IMR-90 (cell line): ENCODE measurements at regions of chr5 and their contacts with region 1.

Region 1: GRCh38 chr5:34898258-34898895 is 16.9 kb downstream of the RAD1 start:
- DNase-seq: peak; percentile 77
- ATAC-seq: peak; percentile 90
- H3K4me3 ChIP-seq: no peak overlapping the region
- H3K27ac ChIP-seq: no peak overlapping the region
- H3K4me1 ChIP-seq: no peaks in the 10 kb centered on the region
- H3K27me3 ChIP-seq: no peaks in the 10 kb centered on the region
- CTCF ChIP-seq: peak; percentile 84
- POLR2A ChIP-seq: 0 out of 2 replicates have a peak, but pooled peaks have one; percentile 38
- RAD21 ChIP-seq: peak; percentile 92

Region 2: DNA sequence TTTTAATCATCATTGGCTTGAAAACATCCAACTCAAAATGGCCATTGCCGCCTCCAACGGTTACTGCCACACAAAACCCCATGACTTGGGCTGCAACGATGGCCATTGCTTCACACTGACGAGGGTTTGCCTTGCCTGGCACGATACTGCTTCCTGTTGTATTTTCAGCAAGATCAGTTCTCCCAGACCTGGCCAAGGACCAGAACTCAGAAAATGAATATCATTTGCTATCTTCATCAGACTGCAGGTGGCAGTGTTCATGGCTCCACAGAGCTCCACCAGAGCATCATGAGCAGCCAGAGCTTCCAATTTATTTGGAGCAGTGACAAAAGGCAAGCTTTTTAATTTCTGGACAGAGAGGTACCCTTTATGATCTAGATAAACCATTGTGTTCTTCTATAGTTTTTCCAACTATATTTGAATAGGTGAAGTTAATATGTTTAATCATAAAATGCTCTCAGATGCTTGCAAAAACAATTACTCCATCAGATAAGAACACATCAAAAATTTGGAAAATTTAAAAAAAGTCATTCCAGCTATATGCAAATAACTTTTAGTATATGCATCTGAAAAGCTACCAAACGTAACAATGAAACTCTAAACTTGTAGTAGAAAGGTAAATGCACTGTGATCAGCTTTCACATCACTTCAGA is 900.9 kb before region 1 on chr5:
- CTCF ChIA-PET with region 1: no interaction called
- POLR2A ChIA-PET with region 1: no interaction called
- dilution Hi-C with region 1: no loop called
- in situ Hi-C with region 1: loop called (anchors 25 kb)
- intact Hi-C with region 1: no loop called
- DNase-seq: peak; percentile 88
- ATAC-seq: peak; percentile 81
- H3K4me3 ChIP-seq: no peak overlapping the region
- H3K27ac ChIP-seq: no peak overlapping the region
- H3K4me1 ChIP-seq: peaks cover 8% of the 10 kb centered on the region; the same call in 1 of the 2 replicates
- H3K27me3 ChIP-seq: no peaks in the 10 kb centered on the region
- CTCF ChIP-seq: peak; percentile 76
- POLR2A ChIP-seq: no peak
- RAD21 ChIP-seq: peak; percentile 81

Region 3: DNA sequence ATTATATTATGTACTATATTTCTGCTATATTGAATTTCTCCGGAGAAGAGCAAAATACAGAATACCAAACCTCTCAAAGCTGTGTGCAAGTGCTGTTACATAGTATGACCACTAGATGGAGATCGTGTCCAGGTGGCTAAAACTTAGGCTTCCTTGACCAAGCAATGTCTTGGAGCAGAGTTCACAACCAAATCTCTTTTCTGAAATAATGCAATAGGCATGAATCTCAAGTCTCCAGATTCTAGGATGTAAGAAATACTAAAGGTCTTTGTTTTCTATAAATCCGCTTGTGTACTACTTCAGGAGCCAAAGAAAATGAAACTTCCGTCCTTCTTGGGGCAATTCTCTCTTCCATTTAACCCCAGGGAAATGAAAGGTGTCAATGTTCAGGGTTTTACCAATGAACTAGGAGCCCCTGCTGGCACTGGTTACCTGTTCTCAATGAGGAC is 423.8 kb before region 1 on chr5:
- CTCF ChIA-PET with region 1: interaction called, 8 read pairs
- POLR2A ChIA-PET with region 1: no interaction called
- dilution Hi-C with region 1: no loop called
- in situ Hi-C with region 1: loop called (anchors 5 kb)
- intact Hi-C with region 1: loop called (anchors 1 kb)
- DNase-seq: peak; percentile 77
- ATAC-seq: peak; percentile 99
- H3K4me3 ChIP-seq: no peak overlapping the region
- H3K27ac ChIP-seq: no peak overlapping the region
- H3K4me1 ChIP-seq: no peaks in the 10 kb centered on the region
- H3K27me3 ChIP-seq: peaks cover 16% of the 10 kb centered on the region
- CTCF ChIP-seq: peak; percentile 94
- POLR2A ChIP-seq: peak; percentile 45; the same call in 1 of the 2 replicates
- RAD21 ChIP-seq: peak; percentile 96

Region 4: GRCh38 chr5:34486160-34486848 is 412.1 kb before region 1 on chr5:
- CTCF ChIA-PET with region 1: interaction called, 13 read pairs
- POLR2A ChIA-PET with region 1: no interaction called
- dilution Hi-C with region 1: no loop called
- in situ Hi-C with region 1: no loop called
- intact Hi-C with region 1: loop called (anchors 1 kb)
- DNase-seq: peak; percentile 88
- ATAC-seq: peak; percentile 54
- H3K4me3 ChIP-seq: no peak overlapping the region
- H3K27ac ChIP-seq: peak overlapping the region; percentile 70; the same call in 1 of the 2 replicates
- H3K4me1 ChIP-seq: peaks cover 31% of the 10 kb centered on the region
- H3K27me3 ChIP-seq: no peaks in the 10 kb centered on the region
- CTCF ChIP-seq: peak; percentile 90
- POLR2A ChIP-seq: peak; percentile 27; the same call in 1 of the 2 replicates
- RAD21 ChIP-seq: peak; percentile 93

Region 5: DNA sequence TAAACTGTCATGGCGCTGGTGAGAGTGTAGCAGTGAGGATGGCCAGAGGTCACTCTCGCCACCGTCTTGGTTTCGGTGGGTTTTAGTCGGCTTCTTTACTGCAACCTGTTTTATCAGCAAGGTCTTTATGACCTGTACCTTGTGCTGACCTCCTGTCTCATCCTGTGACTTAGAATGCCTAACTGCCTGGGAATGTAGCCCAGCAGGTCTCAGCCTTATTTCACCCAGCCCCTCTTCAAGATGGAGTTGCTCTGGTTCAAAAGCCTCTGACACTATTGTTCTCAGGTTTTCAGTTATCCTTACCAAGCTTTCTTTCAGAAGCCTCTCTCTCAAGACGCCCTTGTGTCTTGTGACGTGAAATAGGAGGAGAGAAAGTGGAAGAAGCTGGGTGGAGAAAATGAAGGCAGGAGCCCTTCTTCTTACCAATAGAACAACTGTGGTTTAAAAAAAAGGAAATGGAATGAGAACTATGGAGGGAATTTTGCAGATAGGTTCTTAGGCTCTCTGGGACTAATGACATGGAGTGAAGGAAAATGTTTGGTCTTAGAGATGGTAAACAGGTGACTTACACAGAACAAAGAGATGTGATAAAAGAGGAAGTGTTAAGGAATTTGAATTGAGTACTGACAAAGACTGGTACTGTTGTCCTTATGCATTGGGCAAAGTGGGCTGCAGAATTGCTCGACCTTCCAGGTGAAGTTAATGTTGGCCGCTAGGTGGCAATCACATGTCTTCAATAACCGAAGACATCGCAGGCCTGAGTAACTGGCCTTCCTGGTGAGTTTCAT is 375.6 kb before region 1 on chr5:
- CTCF ChIA-PET with region 1: interaction called, 11 read pairs
- POLR2A ChIA-PET with region 1: interaction called, 3 read pairs
- dilution Hi-C with region 1: no loop called
- in situ Hi-C with region 1: no loop called
- intact Hi-C with region 1: loop called (anchors 1 kb)
- DNase-seq: peak; percentile 92
- ATAC-seq: peak; percentile 84
- H3K4me3 ChIP-seq: no peak overlapping the region
- H3K27ac ChIP-seq: peak overlapping the region; percentile 58; the same call in 1 of the 2 replicates
- H3K4me1 ChIP-seq: peaks cover 14% of the 10 kb centered on the region
- H3K27me3 ChIP-seq: no peaks in the 10 kb centered on the region
- CTCF ChIP-seq: peak; percentile 76
- POLR2A ChIP-seq: 0 out of 2 replicates have a peak, but pooled peaks have one; percentile 29
- RAD21 ChIP-seq: peak; percentile 91

Region 6: DNA sequence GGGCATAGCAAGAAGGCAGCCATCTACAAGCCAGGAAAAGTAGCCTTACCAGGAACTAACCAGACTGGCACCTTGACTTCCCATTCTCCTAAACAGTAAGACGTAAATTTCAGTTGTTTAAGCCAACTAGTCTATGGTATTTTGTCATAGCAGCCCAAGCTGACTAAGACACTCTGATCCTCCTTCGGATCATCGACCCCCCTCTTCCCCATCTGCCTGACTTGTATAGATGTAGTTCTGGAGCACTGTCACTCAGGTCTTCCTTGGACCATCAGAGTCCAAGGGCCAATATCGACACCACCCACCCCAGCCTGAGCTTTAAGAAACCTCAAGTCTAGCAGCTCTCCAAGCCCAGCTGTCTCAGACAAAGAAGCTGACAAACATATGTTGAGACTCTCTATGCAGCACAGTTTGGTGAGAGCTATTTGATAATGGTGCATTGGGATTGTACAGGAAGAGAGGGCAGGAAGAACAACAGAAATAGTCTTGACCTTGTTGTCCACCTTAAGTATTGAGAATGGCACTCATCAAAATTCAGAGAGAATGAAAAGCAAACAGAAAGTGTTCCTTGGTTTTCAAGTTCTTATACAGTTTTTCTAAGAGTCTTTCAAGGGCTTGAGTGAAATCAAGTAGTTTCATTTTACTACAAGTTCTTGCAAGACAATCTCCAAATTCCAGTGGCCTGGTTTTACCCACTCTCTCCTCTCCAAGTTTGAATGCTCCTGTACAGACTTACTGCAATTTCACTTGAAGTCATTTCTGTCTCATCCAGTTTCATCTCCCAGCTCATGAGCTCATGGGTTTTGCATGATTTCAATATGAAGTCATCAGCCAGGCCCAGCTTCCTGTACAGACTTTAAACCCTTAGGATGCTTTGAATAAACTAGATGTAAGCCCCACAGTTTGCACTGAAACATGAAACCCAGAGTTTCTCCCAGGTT is 364.5 kb before region 1 on chr5:
- CTCF ChIA-PET with region 1: no interaction called
- POLR2A ChIA-PET with region 1: no interaction called
- dilution Hi-C with region 1: no loop called
- in situ Hi-C with region 1: no loop called
- intact Hi-C with region 1: no loop called
- DNase-seq: peak; percentile 97
- ATAC-seq: peak; percentile 61
- H3K4me3 ChIP-seq: no peak overlapping the region
- H3K27ac ChIP-seq: peak overlapping the region; percentile 98
- H3K4me1 ChIP-seq: peaks cover 36% of the 10 kb centered on the region
- H3K27me3 ChIP-seq: no peaks in the 10 kb centered on the region
- CTCF ChIP-seq: no peak
- POLR2A ChIP-seq: no peak
- RAD21 ChIP-seq: no peak

Region 7: GRCh38 chr5:34843497-34843896 is 54.9 kb before region 1 on chr5:
- CTCF ChIA-PET with region 1: no interaction called
- POLR2A ChIA-PET with region 1: no interaction called
- dilution Hi-C with region 1: no loop called
- in situ Hi-C with region 1: no loop called
- intact Hi-C with region 1: loop called (anchors 5 kb)
- DNase-seq: peak; percentile 50
- ATAC-seq: no peak; the same call in 1 of the 2 replicates
- H3K4me3 ChIP-seq: no peak overlapping the region
- H3K27ac ChIP-seq: no peak overlapping the region
- H3K4me1 ChIP-seq: peaks cover 3% of the 10 kb centered on the region; the same call in 1 of the 2 replicates
- H3K27me3 ChIP-seq: no peaks in the 10 kb centered on the region
- CTCF ChIP-seq: no peak
- POLR2A ChIP-seq: no peak
- RAD21 ChIP-seq: no peak

Region 8: GRCh38 chr5:34913072-34913471 is 14.7 kb after region 1 on chr5:
- CTCF ChIA-PET with region 1: no interaction called
- POLR2A ChIA-PET with region 1: no interaction called
- dilution Hi-C with region 1: no loop called
- in situ Hi-C with region 1: no loop called
- intact Hi-C with region 1: no loop called
- DNase-seq: peak; percentile 82
- ATAC-seq: peak; percentile 7
- H3K4me3 ChIP-seq: no peak overlapping the region
- H3K27ac ChIP-seq: peak overlapping the region; percentile 55; the same call in 1 of the 2 replicates
- H3K4me1 ChIP-seq: peaks cover 4% of the 10 kb centered on the region; the same call in 1 of the 2 replicates
- H3K27me3 ChIP-seq: no peaks in the 10 kb centered on the region
- CTCF ChIP-seq: no peak
- POLR2A ChIP-seq: no peak
- RAD21 ChIP-seq: no peak